CD4-positive, alpha-beta T cell (primary cell): ENCODE measurements at regions of chr7 and their contacts with region 1.

Region 1: DNA sequence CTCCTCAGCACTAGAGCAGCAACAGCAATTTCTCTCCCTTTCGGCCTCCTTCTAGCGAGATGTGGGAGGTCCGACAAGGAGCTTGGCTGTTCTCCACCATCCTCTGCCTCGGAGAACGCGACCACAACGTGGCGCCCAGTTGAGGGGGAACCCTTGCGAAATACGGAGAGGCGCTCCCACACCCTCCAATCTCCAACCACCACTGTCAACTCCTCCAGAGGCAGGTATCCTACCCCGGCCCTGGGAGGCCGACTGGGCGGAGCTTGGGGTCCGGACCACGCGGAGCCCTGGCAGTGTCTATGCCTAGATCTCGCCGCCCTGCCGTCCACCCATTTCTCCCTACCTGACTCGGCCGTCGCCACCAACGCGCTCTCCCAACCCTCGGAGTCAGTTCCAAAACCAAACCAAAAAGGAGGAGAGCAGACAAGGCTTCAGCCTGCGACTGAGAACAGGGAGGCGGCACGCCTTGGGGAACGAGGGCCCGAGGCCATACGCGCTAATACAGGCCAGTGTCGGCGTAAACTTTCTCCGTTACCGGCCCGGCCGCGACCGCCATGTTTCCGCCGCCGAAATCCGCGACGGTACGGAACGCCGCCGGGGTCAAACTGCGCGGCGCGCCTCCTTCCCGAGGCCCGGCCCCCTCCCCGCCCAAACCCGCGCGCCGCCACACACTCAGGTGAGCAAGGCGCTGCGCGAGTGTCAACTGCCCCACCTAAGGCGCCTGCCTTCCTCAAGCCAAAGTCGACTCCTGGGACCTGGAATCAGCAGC is at the start of gene TMEM168:
- DNase-seq: peak; percentile 80 to 92 (median 84)
- ATAC-seq: peak; percentile 91
- H3K4me3 ChIP-seq: peak within 1 kb of the TSS; percentile 95
- H3K4me3 Mint-ChIP-seq: peak within 1 kb of the TSS; percentile 92
- H3K27ac ChIP-seq: peak within 1 kb of the TSS; percentile 65 to 79
- H3K27ac Mint-ChIP-seq: peak within 1 kb of the TSS; percentile 77
- H3K4me1 ChIP-seq: peaks cover 22% of the 10 kb centered on the region
- H3K4me1 Mint-ChIP-seq: peaks cover 46% of the 10 kb centered on the region
- H3K27me3 ChIP-seq: no peaks in the 10 kb centered on the region
- H3K27me3 Mint-ChIP-seq: no peaks in the 10 kb centered on the region
- CTCF ChIP-seq: no peak
- total RNA-seq, gene TMEM168: 11.5 to 11.9 TPM

Region 2: DNA sequence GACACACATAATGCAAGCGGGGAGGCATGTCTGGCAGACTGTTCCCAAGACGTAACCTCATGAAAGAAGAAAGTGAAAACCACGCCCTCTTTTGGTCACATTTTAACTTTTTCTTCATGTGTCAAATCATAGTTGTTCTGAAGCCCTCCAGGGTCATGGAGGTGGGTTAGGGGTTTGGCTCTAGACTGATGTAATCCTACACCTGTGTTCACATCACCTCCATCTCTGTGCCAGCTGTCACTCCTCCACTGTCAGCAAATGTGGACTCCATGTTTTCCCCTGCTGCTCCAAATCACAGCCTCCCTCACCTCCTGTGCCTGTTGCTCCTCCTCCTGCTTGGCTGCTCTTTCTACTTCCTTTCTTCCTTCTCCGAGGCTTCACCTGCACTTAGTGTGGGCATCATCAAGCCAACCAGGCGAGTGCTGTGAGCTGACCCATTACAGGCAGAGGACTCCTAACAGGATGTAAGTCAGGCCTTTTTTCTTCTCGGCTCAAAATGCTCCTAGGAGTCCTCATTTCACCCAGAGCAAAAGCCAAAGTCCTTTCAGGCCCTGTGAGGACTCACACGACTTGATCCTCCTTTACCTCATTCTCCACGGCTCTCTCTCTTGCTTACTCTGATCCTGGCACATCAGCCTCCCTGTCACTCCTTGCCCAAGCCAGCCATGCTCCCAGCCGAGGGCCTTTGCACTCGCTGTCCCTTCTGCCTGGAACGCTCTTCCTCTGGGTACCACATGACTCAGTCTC is 406.2 kb before region 1 on chr7:
- CTCF ChIA-PET with region 1: no interaction called
- POLR2A ChIA-PET with region 1: no interaction called
- intact Hi-C with region 1: loop called in 1 of 2 experiments (anchors 5 kb)
- DNase-seq: peak in 3 of 14 experiments; percentile 10 to 25 (median 21)
- ATAC-seq: peak; percentile 34
- H3K4me3 ChIP-seq: no peak overlapping the region
- H3K4me3 Mint-ChIP-seq: no peak overlapping the region
- H3K27ac ChIP-seq: no peak overlapping the region
- H3K27ac Mint-ChIP-seq: no peak overlapping the region
- H3K4me1 ChIP-seq: no peaks in the 10 kb centered on the region
- H3K4me1 Mint-ChIP-seq: no peaks in the 10 kb centered on the region
- H3K27me3 ChIP-seq: no peaks in the 10 kb centered on the region
- H3K27me3 Mint-ChIP-seq: peaks cover 4% of the 10 kb centered on the region
- CTCF ChIP-seq: no peak

Region 3: DNA sequence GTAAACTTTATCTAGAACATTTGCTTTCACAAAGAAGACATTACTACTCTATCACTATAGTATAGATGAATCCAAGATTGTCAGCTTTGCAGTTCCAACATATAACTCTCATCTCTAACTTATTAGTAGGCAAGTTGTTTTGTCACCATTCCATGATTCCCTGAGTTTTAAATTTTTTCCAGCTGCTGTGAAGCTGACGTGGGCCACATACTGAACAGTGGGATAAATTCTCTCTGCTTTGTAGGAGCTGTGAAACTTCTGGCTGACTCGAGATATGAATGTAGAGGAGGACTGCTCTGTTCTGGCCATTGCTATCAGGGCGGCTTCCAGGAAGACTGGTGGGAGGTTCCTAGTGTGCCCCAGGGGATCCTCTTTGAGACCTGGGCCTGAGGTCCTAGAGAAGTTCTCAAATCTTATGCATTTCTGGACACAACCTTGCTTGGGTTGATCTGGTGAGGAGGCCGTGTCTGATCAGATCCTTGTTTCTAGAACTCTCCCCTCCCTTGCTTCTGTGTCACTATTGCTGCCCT is 251.2 kb before region 1 on chr7:
- CTCF ChIA-PET with region 1: no interaction called
- POLR2A ChIA-PET with region 1: no interaction called
- intact Hi-C with region 1: no loop called
- DNase-seq: no peak
- ATAC-seq: no peak
- H3K4me3 ChIP-seq: no peak overlapping the region
- H3K4me3 Mint-ChIP-seq: no peak overlapping the region
- H3K27ac ChIP-seq: no peak overlapping the region
- H3K27ac Mint-ChIP-seq: no peak overlapping the region
- H3K4me1 ChIP-seq: no peaks in the 10 kb centered on the region
- H3K4me1 Mint-ChIP-seq: no peaks in the 10 kb centered on the region
- H3K27me3 ChIP-seq: peaks cover 0 to 9% of the 10 kb centered on the region in 2 experiments
- H3K27me3 Mint-ChIP-seq: peaks cover 30% of the 10 kb centered on the region
- CTCF ChIP-seq: no peak

Region 4: GRCh38 chr7:112819536-112819935 is 29.5 kb after region 1 on chr7:
- CTCF ChIA-PET with region 1: no interaction called
- POLR2A ChIA-PET with region 1: no interaction called
- intact Hi-C with region 1: no loop called
- DNase-seq: no peak
- ATAC-seq: no peak
- H3K4me3 ChIP-seq: no peak overlapping the region
- H3K4me3 Mint-ChIP-seq: no peak overlapping the region
- H3K27ac ChIP-seq: no peak overlapping the region
- H3K27ac Mint-ChIP-seq: no peak overlapping the region
- H3K4me1 ChIP-seq: no peaks in the 10 kb centered on the region
- H3K4me1 Mint-ChIP-seq: no peaks in the 10 kb centered on the region
- H3K27me3 ChIP-seq: no peaks in the 10 kb centered on the region
- H3K27me3 Mint-ChIP-seq: no peaks in the 10 kb centered on the region
- CTCF ChIP-seq: no peak

Region 5: DNA sequence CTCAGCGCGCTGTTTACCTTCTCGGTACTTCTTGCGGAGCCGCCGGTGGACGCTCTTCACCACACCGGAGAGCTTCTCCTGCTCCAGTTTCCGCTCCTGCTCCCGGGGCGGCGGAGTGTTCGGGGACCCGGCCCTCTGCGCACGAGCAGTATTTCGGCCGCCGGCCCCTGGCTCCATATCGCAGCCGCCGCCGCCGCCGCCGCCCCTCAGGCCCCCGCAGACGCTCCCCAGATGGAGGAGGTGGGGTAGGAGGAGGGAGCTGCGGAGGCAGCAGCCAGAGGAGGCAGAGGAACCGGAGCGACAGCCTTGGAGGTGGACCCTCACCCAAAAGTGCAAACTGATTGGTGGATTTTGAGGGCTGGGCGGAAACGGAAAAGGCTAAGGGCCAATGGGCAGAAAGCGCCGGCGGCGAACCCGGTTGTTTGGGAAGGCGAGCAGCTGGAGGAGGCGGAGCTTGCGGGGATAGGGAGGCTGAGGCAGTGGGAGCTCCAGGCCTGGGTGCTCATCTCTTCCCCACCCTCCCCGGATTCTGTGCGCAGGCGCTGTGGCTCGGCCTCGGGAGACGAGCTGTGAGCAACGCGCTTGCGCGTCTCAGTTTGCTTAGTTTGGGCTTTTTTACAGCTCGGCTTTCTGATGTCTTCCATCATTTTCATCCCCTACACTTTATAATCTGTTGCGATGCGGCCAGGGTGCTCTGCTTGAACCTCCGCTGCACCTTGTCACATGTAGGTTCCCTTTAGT is 149.7 kb after region 1 on chr7:
- CTCF ChIA-PET with region 1: no interaction called
- POLR2A ChIA-PET with region 1: interaction called, 11 read pairs
- intact Hi-C with region 1: loop called (anchors 1 to 2 kb)
- DNase-seq: peak; percentile 98 to 100 (median 99)
- ATAC-seq: peak; percentile 95
- H3K4me3 ChIP-seq: peak overlapping the region; percentile 83
- H3K4me3 Mint-ChIP-seq: peak overlapping the region; percentile 98
- H3K27ac ChIP-seq: peak overlapping the region; percentile 53 to 66
- H3K27ac Mint-ChIP-seq: peak overlapping the region; percentile 88
- H3K4me1 ChIP-seq: peaks cover 18% of the 10 kb centered on the region
- H3K4me1 Mint-ChIP-seq: peaks cover 53% of the 10 kb centered on the region
- H3K27me3 ChIP-seq: no peaks in the 10 kb centered on the region
- H3K27me3 Mint-ChIP-seq: no peaks in the 10 kb centered on the region
- CTCF ChIP-seq: no peak